HEK293 (cell line): ENCODE measurements at regions of chrX and their contacts with region 1.

Region 1: GRCh38 chrX:71181910-71182799 is 37.5 kb downstream of the NLGN3 start:
- H3K4me3 ChIP-seq: peak overlapping the region; percentile 2
- H3K27ac ChIP-seq: peak overlapping the region; percentile 65
- H3K4me1 ChIP-seq: peaks cover 3% of the 10 kb centered on the region; the same call in 1 of the 2 replicates
- CTCF ChIP-seq: no peak

Region 2: DNA sequence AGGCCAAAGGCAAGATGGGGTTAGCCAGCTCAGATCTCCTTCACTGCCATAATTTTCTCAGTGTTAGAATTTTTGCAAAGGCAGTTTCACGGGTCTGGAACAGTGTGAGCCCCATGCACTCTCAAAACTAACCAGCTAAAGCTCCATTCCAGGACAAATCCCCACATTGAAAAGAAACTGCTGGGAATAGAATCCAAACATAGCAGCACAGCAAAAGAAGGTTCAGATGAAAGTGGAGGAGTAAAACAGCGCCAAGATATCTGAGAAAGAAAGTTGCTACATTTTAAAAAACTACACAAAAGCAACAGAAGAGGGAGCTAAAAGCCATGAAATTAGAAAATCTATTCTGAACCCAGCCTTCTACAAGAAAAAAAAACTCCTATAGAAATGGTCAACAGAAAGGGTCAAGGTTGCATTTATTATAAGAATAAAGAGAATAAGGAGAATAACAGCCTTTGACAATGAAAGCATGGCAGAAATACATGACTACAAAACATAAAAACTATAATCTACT is 211.6 kb before region 1 on chrX:
- CTCF ChIA-PET with region 1: interaction called, 40 read pairs
- POLR2A ChIA-PET with region 1: no interaction called
- H3K4me3 ChIP-seq: no peak overlapping the region
- H3K27ac ChIP-seq: no peak overlapping the region
- H3K4me1 ChIP-seq: no peaks in the 10 kb centered on the region
- CTCF ChIP-seq: peak; percentile 43; the same call in 1 of the 2 replicates

Region 3: GRCh38 chrX:71254092-71254941 is 72.2 kb after region 1 on chrX and contains the start of gene ZMYM3:
- CTCF ChIA-PET with region 1: interaction called, 3 read pairs
- POLR2A ChIA-PET with region 1: interaction called, 19 read pairs
- H3K4me3 ChIP-seq: peak within 1 kb of the TSS; percentile 85
- H3K27ac ChIP-seq: peak within 1 kb of the TSS; percentile 74; the same call in 1 of the 2 replicates
- H3K4me1 ChIP-seq: peaks cover 5% of the 10 kb centered on the region; the same call in 1 of the 2 replicates
- CTCF ChIP-seq: no peak; the same call in 1 of the 2 replicates

Region 4: GRCh38 chrX:71283403-71284143 is 101.4 kb after region 1 on chrX and contains the start of gene NONO:
- CTCF ChIA-PET with region 1: interaction called, 3 read pairs
- POLR2A ChIA-PET with region 1: interaction called, 19 read pairs
- H3K4me3 ChIP-seq: peak within 1 kb of the TSS; percentile 84
- H3K27ac ChIP-seq: peak within 1 kb of the TSS; percentile 98
- H3K4me1 ChIP-seq: peaks cover 4% of the 10 kb centered on the region; the same call in 1 of the 2 replicates
- CTCF ChIP-seq: peak; percentile 6; the same call in 1 of the 2 replicates

Region 5: DNA sequence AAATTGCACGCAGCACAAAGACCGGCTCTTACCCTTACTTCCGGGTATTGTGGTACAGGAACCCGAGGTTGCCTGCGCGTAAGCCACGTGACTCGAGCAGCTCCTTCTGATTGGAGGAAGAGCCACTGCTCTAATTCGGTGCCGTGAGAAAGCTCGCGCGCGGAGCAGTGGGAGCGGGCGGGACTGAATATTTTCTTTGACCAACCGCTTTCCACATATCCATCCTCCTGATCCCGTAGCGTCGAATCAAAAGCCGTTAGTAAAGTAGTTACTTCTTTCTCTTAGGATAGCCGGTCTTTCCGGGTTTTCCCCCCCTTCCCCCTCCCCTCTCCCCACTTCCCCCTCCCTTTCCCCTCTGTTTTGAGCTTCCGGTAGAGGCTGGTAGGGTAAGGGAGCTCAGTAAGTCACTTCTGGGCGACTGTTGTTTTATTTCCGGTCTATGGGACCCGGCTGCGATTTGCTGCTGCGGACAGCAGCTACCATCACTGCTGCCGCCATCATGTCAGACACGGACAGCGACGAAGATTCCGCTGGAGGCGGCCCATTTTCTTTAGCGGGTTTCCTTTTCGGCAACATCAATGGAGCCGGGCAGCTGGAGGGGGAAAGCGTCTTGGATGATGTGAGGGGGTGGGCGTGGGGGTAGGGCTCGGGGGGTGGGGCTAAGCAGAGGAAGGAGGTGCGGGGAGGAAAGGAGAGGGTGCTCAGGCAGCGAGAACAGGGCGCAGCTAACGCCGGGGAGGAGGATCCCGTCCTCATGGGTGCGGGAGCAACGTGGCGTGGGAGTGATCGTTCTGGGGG is 183.9 kb after region 1 on chrX and contains the start of gene TAF1:
- CTCF ChIA-PET with region 1: no interaction called
- POLR2A ChIA-PET with region 1: interaction called, 16 read pairs
- H3K4me3 ChIP-seq: peak within 1 kb of the TSS; percentile 76
- H3K27ac ChIP-seq: peak within 1 kb of the TSS; percentile 81
- H3K4me1 ChIP-seq: 0 out of 2 replicates have a peak, but pooled peaks cover 2% of the 10 kb centered on the region
- CTCF ChIP-seq: no peak

Region 6: DNA sequence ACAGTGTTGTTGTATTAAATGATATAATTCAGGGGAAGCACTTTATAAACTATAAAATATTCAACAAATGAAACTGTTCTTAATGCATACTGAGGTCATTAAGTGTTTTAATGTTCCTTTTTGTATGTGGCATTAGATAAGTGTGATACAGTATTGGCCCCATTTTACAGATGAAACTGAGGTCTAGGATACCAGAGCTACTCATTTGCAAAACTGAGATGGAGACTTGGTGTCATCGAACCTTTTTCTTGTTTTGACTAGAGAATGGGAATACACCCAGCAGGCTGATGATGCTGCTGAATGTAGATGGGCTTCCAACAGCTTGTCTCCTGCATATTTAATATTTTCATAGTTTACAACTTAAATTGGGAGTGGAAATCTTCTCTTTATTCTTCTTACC is 218.6 kb after region 1 on chrX:
- CTCF ChIA-PET with region 1: no interaction called
- POLR2A ChIA-PET with region 1: no interaction called
- H3K4me3 ChIP-seq: no peak overlapping the region
- H3K27ac ChIP-seq: no peak overlapping the region
- H3K4me1 ChIP-seq: no peaks in the 10 kb centered on the region
- CTCF ChIP-seq: no peak